Transverse colon (tissue), 4 donors: ENCODE measurements at regions of chr13 and their contacts with region 1.

Region 1: DNA sequence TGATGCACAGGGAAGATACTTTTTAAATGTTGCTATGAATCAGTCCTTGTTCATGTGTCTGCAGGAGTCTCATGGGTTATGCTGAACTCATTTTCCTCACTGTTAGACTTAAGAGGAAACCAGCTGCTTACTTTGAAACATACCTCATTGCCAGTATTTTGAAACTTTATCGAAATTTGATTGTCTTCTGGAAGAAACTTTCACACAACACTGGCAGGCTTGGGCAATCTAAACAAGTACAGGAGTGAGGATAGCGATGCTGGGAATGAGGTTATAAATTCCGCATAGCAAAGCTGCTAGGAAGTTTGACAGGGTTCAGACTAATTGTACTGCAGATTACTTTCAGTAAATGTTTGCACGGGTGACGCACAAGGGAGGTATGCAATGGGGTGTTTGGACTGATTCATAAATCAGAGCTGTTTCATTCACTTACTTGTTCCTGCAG is 245.7 kb downstream of the DNAJC15 start:
- DNase-seq: peak; percentile 62
- H3K4me3 ChIP-seq: no peak overlapping the region
- H3K27ac ChIP-seq: peak overlapping the region; percentile 42 to 68 (median 46)
- H3K4me1 ChIP-seq: peaks cover 0 to 13% (median 6%) of the 10 kb centered on the region in 4 donors
- H3K27me3 ChIP-seq: no peaks in the 10 kb centered on the region
- CTCF ChIP-seq: no peak
- EP300 ChIP-seq: peak; percentile 95
- POLR2A ChIP-seq: no peak

Region 2: DNA sequence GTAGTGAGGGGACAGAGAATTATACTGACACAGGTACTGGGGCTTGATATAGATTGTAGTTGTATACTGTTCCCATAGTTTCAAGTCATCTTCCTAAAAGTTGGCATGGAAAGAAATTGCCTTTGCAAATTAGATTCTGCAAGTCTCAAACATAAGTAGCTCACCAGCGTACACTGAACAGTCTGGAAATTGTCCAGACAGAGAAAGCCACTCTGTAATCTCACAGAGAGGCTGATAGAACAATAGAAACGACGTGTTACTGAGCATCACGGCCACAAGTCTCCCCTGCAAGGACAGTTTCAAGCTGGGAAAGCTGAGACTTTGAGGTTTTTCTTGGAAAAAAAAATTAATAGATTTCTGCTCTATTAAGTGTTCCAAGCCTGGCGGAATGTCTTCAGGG is 17.1 kb before region 1 on chr13:
- in situ Hi-C with region 1: no loop called
- intact Hi-C with region 1: no loop called
- DNase-seq: no peak
- H3K4me3 ChIP-seq: no peak overlapping the region
- H3K27ac ChIP-seq: no peak overlapping the region
- H3K4me1 ChIP-seq: no peaks in the 10 kb centered on the region
- H3K27me3 ChIP-seq: no peaks in the 10 kb centered on the region
- CTCF ChIP-seq: no peak
- EP300 ChIP-seq: no peak
- POLR2A ChIP-seq: no peak

Region 3: GRCh38 chr13:44573790-44574465 is 1304.9 kb after region 1 on chr13:
- in situ Hi-C with region 1: no loop called
- intact Hi-C with region 1: loop called (anchors 5 kb)
- DNase-seq: no peak
- H3K4me3 ChIP-seq: peak overlapping the region in 1 of 4 donors; percentile 0
- H3K27ac ChIP-seq: no peak overlapping the region
- H3K4me1 ChIP-seq: peaks cover 8 to 50% (median 25%) of the 10 kb centered on the region in 4 donors
- H3K27me3 ChIP-seq: no peaks in the 10 kb centered on the region
- CTCF ChIP-seq: peak; percentile 8 to 40 (median 25)
- EP300 ChIP-seq: no peak
- POLR2A ChIP-seq: no peak

Region 4: GRCh38 chr13:44591316-44591715 is 1322.3 kb after region 1 on chr13:
- in situ Hi-C with region 1: no loop called
- intact Hi-C with region 1: no loop called
- DNase-seq: no peak
- H3K4me3 ChIP-seq: no peak overlapping the region
- H3K27ac ChIP-seq: no peak overlapping the region
- H3K4me1 ChIP-seq: no peaks in the 10 kb centered on the region
- H3K27me3 ChIP-seq: no peaks in the 10 kb centered on the region
- CTCF ChIP-seq: no peak
- EP300 ChIP-seq: no peak
- POLR2A ChIP-seq: no peak